K562 (cell line): ENCODE measurements at regions of chr11 and their contacts with region 1.

Region 1: DNA sequence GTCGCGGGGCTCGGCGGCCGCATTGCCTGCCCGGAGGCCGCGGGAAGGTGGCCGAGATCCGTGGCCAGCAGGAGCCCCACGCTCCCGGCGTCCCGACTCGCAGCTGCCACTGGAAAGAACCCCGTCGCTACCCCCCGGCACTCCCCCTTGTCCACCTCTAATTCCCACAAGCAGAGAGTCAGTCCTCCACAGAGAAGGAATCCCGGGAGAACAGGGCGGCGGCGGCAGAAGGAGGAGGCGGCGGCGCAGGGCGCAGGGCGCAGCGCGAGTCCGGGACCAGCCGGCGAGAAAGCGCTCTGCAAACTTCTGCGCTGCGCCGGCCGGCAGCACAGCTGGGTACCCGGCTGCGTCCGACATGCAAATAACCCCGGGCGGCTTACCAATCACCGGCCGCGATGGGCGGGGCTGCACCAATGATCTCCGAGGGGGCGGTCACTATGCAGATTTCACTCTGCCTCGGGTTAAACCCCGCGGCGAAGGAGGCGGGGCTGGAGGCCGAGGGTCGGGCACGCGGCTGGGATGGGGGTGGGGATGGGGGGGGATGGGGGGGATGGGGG is at the start of gene ABTB2:
- DNase-seq: peak; percentile 95 to 98 (median 96)
- ATAC-seq: peak; percentile 98
- H3K4me3 ChIP-seq: peak within 1 kb of the TSS; percentile 32
- H3K27ac ChIP-seq: 0 out of 3 replicates have a peak within 1 kb of the TSS, but pooled peaks have one; percentile 22
- H3K4me1 ChIP-seq: peaks cover 9 to 27% of the 10 kb centered on the region in 2 experiments
- H3K27me3 ChIP-seq: peaks cover 17 to 23% of the 10 kb centered on the region in 2 experiments
- CTCF ChIP-seq: no peak
- EP300 ChIP-seq: no peak
- POLR2A ChIP-seq: no peak
- RAD21 ChIP-seq: peak in 1 of 2 experiments; percentile 16; a peak in 1 of 4 replicates
- polyA plus RNA-seq, gene ABTB2: 0.03 TPM in 1 of 2 experiments, not detected in the other

Region 2: DNA sequence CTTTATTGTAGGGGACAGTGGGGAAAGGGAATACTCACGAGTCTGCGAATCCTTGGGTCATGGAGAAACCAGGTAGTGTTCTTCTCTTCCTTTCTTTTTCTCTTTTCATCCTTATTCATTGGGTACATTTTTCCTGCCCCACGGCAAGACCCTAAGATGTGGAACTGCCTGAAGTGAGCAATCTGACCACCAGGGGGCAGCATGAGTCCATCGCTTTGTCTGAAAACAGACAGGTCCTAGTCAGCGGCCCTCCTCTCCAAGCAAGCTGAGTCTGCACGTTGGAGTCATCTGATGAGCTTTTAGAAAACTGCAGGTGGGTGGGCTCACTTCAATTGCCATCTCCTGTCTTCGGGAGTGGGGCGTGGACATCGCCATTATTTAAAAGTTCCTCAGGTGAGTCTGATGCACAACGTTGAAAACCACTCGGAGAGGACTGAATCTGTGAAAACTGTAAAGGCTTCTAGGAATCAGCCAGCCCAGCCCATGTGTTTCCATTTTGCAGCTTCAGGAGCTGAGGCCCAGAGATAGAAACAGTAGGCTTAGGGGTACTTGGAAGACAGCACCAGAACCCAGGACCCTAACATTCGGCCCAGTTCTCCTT is 549.5 kb before region 1 on chr11:
- CTCF ChIA-PET with region 1: interaction called, 7 read pairs
- POLR2A ChIA-PET with region 1: no interaction called
- in situ Hi-C with region 1: no loop called
- intact Hi-C with region 1: loop called (anchors 1 kb)
- DNase-seq: peak; percentile 79 to 90 (median 80)
- ATAC-seq: peak; percentile 99
- H3K4me3 ChIP-seq: no peak overlapping the region
- H3K27ac ChIP-seq: no peak overlapping the region
- H3K4me1 ChIP-seq: no peaks in the 10 kb centered on the region
- H3K27me3 ChIP-seq: peaks cover 9% of the 10 kb centered on the region in 2 experiments; a peak in 4 of 5 replicates
- CTCF ChIP-seq: peak; percentile 82 to 92 (median 92)
- EP300 ChIP-seq: no peak
- POLR2A ChIP-seq: no peak
- RAD21 ChIP-seq: peak; percentile 77 to 87

Region 3: DNA sequence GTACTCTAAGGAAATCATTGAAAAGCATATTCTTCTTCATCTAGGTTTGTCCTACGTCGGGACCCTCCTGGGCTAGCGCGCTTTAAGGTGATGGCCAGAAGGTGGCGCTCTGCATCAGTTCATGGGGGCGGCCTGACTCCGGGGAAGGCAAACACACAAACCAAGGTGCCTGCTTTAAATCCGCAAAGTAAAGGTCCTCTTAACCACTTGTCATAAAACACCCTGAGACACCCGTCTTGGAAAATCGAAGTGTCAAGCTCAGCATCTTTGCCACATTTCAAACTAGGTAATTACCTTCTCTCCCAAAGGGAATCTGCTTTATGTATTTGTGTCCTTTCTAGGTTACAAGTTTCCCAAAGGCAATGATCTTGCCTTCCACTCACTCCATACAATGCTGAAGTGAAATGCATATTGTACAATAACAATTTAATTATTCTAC is 499.8 kb before region 1 on chr11:
- CTCF ChIA-PET with region 1: no interaction called
- POLR2A ChIA-PET with region 1: no interaction called
- in situ Hi-C with region 1: no loop called
- intact Hi-C with region 1: loop called (anchors 10 kb)
- DNase-seq: peak; percentile 78 to 90 (median 83)
- ATAC-seq: peak; percentile 98
- H3K4me3 ChIP-seq: no peak overlapping the region
- H3K27ac ChIP-seq: no peak overlapping the region
- H3K4me1 ChIP-seq: peaks cover 0 to 2% of the 10 kb centered on the region in 2 experiments; a peak in 3 of 5 replicates
- H3K27me3 ChIP-seq: no peaks in the 10 kb centered on the region
- CTCF ChIP-seq: peak; percentile 91 to 98 (median 96)
- EP300 ChIP-seq: no peak
- POLR2A ChIP-seq: peak; percentile 43; the same call in 1 of the 2 replicates
- RAD21 ChIP-seq: peak; percentile 99

Region 4: GRCh38 chr11:34174412-34175041 is 183.3 kb before region 1 on chr11:
- CTCF ChIA-PET with region 1: interaction called, 80 read pairs
- POLR2A ChIA-PET with region 1: no interaction called
- in situ Hi-C with region 1: loop called (anchors 5 kb)
- intact Hi-C with region 1: loop called (anchors 1 kb)
- DNase-seq: peak; percentile 84 to 90 (median 88)
- ATAC-seq: peak; percentile 99
- H3K4me3 ChIP-seq: peak overlapping the region; percentile 16; the same call in 1 of the 2 replicates
- H3K27ac ChIP-seq: no peak overlapping the region
- H3K4me1 ChIP-seq: peaks cover 2 to 18% of the 10 kb centered on the region in 2 experiments; a peak in 3 of 5 replicates
- H3K27me3 ChIP-seq: peaks cover 27 to 58% of the 10 kb centered on the region in 2 experiments; a peak in 4 of 5 replicates
- CTCF ChIP-seq: peak; percentile 88 to 97 (median 94)
- EP300 ChIP-seq: no peak
- POLR2A ChIP-seq: no peak
- RAD21 ChIP-seq: peak; percentile 97 to 99

Region 5: DNA sequence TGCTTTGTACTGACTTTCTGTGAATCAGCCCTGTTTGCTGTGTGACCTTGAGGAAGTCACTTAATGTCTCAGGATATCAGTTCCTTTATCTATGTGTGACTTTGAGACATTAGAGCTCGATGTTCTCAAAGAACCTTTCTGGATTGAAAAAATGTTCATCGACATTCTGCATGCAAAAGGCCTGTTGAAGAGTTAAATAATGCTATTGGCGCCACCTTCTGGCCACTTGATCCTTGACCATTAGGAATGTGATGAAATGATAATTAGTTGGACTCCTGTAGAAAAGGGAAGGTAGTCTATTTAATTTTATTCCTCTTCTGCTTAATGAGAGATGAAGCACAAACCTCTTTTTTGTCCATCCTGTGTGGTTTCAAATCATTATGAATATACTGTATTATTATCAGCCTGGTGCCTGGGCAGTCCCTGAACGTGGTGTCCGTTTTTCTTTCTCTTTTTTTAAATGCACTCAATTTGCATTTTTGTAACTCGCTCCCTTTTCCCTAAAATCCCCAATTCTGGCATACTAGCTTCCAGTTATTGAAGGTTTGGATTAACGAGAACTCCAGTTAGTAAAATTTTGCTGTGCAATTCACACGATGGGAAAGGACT is 135.1 kb after region 1 on chr11:
- CTCF ChIA-PET with region 1: interaction called, 10 read pairs
- POLR2A ChIA-PET with region 1: interaction called, 3 read pairs
- in situ Hi-C with region 1: no loop called
- intact Hi-C with region 1: loop called (anchors 2 kb)
- DNase-seq: peak; percentile 58 to 82 (median 64)
- ATAC-seq: peak; percentile 84
- H3K4me3 ChIP-seq: no peak overlapping the region
- H3K27ac ChIP-seq: no peak overlapping the region
- H3K4me1 ChIP-seq: peaks cover 0 to 4% of the 10 kb centered on the region in 2 experiments; a peak in 2 of 5 replicates
- H3K27me3 ChIP-seq: peaks cover 7 to 44% of the 10 kb centered on the region in 2 experiments; a peak in 4 of 5 replicates
- CTCF ChIP-seq: peak; percentile 54 to 87 (median 69); a peak in 5 of 6 replicates
- EP300 ChIP-seq: no peak
- POLR2A ChIP-seq: no peak
- RAD21 ChIP-seq: peak; percentile 76 to 88

Region 6: GRCh38 chr11:34721646-34722045 is 363.9 kb after region 1 on chr11:
- CTCF ChIA-PET with region 1: no interaction called
- POLR2A ChIA-PET with region 1: no interaction called
- in situ Hi-C with region 1: no loop called
- intact Hi-C with region 1: no loop called
- DNase-seq: no peak
- ATAC-seq: no peak
- H3K4me3 ChIP-seq: no peak overlapping the region
- H3K27ac ChIP-seq: no peak overlapping the region
- H3K4me1 ChIP-seq: no peaks in the 10 kb centered on the region
- H3K27me3 ChIP-seq: no peaks in the 10 kb centered on the region
- CTCF ChIP-seq: no peak
- EP300 ChIP-seq: no peak
- POLR2A ChIP-seq: no peak
- RAD21 ChIP-seq: no peak